ENCODE measurements at regions of chr1 and their contacts with region 1.

Region 1: GRCh38 chr1:206912445-206913095 is 9.2 kb downstream of the FCMR start:
- DNase-seq: peak; percentile 48 to 69
- ATAC-seq: peak; percentile 55 to 56
- H3K4me3 ChIP-seq: no peak overlapping the region
- H3K27ac ChIP-seq: no peak overlapping the region
- H3K4me1 ChIP-seq: peaks cover 19 to 20% of the 10 kb centered on the region in 2 donors
- H3K27me3 ChIP-seq: peaks cover 0 to 4% (median 0%) of the 10 kb centered on the region in 3 donors
- CTCF ChIP-seq: peak; percentile 76 to 88 (median 87)
- POLR2A ChIP-seq: no peak

Region 2: DNA sequence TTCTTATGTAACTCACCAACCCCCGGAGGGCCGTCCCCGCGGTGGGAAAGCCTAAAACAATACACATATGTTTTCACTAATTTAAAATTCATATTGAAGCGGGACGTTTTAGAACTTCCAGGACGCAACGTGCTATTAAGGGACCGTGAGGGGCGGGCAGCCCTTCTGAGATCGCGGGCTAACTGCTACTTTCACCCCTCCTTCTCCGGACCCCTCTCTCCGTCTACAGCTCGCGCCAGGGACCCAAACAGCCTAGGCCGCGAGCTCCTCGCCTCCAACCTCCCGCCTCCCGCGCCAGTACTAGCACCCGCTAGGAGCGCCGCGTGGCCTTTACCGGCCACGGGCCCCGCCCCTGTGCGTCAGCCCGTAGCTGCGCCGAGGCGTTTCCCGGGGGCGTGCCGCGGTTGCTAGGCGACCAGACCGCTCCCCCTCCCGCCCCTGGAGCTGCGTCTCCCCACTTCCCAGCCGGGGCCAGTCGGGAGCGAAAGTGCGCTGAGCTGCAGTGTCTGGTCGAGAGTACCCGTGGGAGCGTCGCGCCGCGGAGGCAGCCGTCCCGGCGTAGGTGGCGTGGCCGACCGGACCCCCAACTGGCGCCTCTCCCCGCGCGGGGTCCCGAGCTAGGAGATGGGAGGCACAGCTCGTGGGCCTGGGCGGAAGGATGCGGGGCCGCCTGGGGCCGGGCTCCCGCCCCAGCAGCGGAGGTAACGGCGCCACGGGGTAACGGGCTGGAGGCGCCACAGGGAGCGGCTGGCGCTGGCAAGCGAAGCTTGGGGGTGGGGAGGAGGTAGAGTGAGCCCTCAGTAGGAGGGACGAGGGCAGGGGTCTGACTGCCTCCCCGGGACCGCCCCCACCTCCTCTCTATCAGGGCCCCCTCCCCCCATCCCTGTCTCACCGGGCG is 277.2 kb before region 1 on chr1 and contains the start of gene DYRK3:
- in situ Hi-C with region 1: loop called in 3 of 4 experiments (anchors 5 to 10 kb)
- intact Hi-C with region 1: loop called (anchors 1 kb)
- DNase-seq: peak; percentile 84 to 88
- ATAC-seq: peak; percentile 81 to 83
- H3K4me3 ChIP-seq: peak within 1 kb of the TSS; percentile 76 to 93 (median 88)
- H3K27ac ChIP-seq: peak within 1 kb of the TSS; percentile 70 to 79 (median 73)
- H3K4me1 ChIP-seq: peaks cover 11 to 16% of the 10 kb centered on the region in 2 donors
- H3K27me3 ChIP-seq: no peaks in the 10 kb centered on the region
- CTCF ChIP-seq: peak in 3 of 5 experiments; percentile 26 to 46 (median 29)
- POLR2A ChIP-seq: peak; percentile 89 to 95
- total RNA-seq, gene DYRK3: 0.85 to 1.8 (median 1.0) TPM

Region 3: GRCh38 chr1:206693029-206693428 is 219.5 kb before region 1 on chr1:
- in situ Hi-C with region 1: no loop called
- intact Hi-C with region 1: loop called (anchors 5 kb)
- DNase-seq: peak; percentile 81 to 93
- ATAC-seq: peak; percentile 60 to 67
- H3K4me3 ChIP-seq: peak overlapping the region; percentile 34 to 55 (median 37)
- H3K27ac ChIP-seq: peak overlapping the region; percentile 93 to 98 (median 96)
- H3K4me1 ChIP-seq: peaks cover 100% of the 10 kb centered on the region in 2 donors
- H3K27me3 ChIP-seq: no peaks in the 10 kb centered on the region
- CTCF ChIP-seq: no peak
- POLR2A ChIP-seq: peak; percentile 57 to 60

Region 4: GRCh38 chr1:206734499-206735142 is 177.9 kb before region 1 on chr1:
- in situ Hi-C with region 1: loop called in 3 of 4 experiments (anchors 5 to 10 kb)
- intact Hi-C with region 1: loop called (anchors 2 kb)
- DNase-seq: no peak
- ATAC-seq: peak; percentile 24 to 30
- H3K4me3 ChIP-seq: no peak overlapping the region
- H3K27ac ChIP-seq: no peak overlapping the region
- H3K4me1 ChIP-seq: peaks cover 16 to 18% of the 10 kb centered on the region in 2 donors
- H3K27me3 ChIP-seq: no peaks in the 10 kb centered on the region
- CTCF ChIP-seq: peak; percentile 39 to 62 (median 54)
- POLR2A ChIP-seq: no peak

Region 5: DNA sequence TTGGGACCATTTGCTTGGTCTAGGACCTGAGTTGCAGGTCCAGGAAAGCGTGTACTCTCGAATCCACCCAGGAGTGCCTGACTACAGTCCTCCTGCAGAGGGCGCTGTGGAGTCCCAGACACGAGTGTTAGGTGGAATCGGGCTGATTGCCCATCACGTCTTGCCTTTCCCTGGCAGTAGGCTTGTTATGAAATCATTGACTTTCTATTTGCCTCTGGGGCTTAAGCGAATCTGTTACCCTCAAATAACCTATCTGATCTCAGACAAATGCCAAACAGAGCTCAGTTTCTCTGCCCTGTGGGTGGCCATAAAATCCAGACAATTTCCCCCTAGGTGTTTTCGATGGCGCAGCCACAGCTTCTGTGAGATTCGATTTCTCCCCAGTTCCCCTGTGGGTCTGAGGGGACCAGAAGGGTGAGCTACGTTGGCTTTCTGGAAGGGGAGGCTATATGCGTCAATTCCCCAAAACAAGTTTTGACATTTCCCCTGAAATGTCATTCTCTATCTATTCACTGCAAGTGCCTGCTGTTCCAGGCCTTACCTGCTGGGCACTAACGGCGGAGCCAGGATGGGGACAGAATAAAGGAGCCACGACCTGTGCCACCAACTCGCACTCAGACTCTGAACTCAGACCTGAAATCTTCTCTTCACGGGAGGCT is 47.4 kb before region 1 on chr1 and contains the start of gene IL20:
- in situ Hi-C with region 1: loop called (anchors 10 kb)
- intact Hi-C with region 1: loop called (anchors 1 kb)
- DNase-seq: peak; percentile 54 to 84
- ATAC-seq: peak; percentile 89 to 96
- H3K4me3 ChIP-seq: no peak within 1 kb of the TSS
- H3K27ac ChIP-seq: peak within 1 kb of the TSS in 1 of 4 donors; percentile 44
- H3K4me1 ChIP-seq: peaks cover 0 to 3% of the 10 kb centered on the region in 2 donors
- H3K27me3 ChIP-seq: no peaks in the 10 kb centered on the region
- CTCF ChIP-seq: peak; percentile 73 to 91 (median 82)
- POLR2A ChIP-seq: no peak
- total RNA-seq, gene IL20: not detected

Region 6: GRCh38 chr1:207052911-207053769 is 140.6 kb after region 1 on chr1 and contains the start of gene PFKFB2:
- in situ Hi-C with region 1: no loop called
- intact Hi-C with region 1: loop called (anchors 5 kb)
- DNase-seq: peak; percentile 97 to 98
- ATAC-seq: peak; percentile 70 to 73
- H3K4me3 ChIP-seq: peak within 1 kb of the TSS; percentile 74 to 82 (median 76)
- H3K27ac ChIP-seq: peak within 1 kb of the TSS; percentile 93 to 95 (median 94)
- H3K4me1 ChIP-seq: peaks cover 29 to 50% of the 10 kb centered on the region in 2 donors
- H3K27me3 ChIP-seq: no peaks in the 10 kb centered on the region
- CTCF ChIP-seq: peak; percentile 42 to 58 (median 52)
- POLR2A ChIP-seq: peak; percentile 98
- total RNA-seq, gene PFKFB2: 35.5 to 40.3 (median 37.6) TPM

Region 7: DNA sequence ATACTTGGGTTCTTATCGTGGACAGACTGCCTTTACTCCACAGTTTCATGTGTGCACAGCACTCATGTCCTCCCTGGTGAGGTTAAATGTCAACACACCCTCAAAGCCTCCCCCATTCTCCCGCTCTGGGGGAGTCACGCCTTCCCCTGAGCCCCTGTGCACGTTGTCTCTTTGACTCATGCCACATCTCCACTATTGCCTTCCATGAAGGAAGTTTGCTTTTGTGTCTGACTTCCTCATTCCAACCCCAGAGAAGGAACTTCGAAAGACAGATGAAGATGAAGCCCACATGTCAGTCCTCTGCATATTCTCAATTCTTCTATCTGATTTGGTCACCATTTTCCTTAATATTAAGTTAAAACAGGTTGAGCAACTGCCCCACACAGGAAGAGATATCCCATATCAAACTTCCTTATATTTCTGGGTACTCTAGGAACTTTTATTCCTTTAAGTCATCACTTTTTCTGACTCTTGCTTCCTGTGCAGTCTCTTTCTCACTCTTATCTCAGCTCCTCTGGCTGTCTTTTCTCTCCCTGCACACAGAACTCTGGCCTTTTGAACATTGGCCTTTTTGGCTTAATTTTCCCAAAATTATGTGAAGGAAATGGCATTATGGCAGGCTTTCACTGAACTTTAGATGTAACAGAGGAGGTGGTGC is 233.0 kb after region 1 on chr1:
- in situ Hi-C with region 1: no loop called
- intact Hi-C with region 1: no loop called
- DNase-seq: no peak
- ATAC-seq: no peak
- H3K4me3 ChIP-seq: no peak overlapping the region
- H3K27ac ChIP-seq: no peak overlapping the region
- H3K4me1 ChIP-seq: no peaks in the 10 kb centered on the region
- H3K27me3 ChIP-seq: no peaks in the 10 kb centered on the region
- CTCF ChIP-seq: no peak
- POLR2A ChIP-seq: no peak

Region 8: GRCh38 chr1:207321079-207321789 is 408.7 kb after region 1 on chr1 and contains the start of gene CD55:
- in situ Hi-C with region 1: no loop called
- intact Hi-C with region 1: no loop called
- DNase-seq: peak; percentile 97 to 98
- ATAC-seq: peak; percentile 89 to 91
- H3K4me3 ChIP-seq: peak within 1 kb of the TSS; percentile 82 to 99 (median 95)
- H3K27ac ChIP-seq: peak within 1 kb of the TSS; percentile 96 to 100 (median 98)
- H3K4me1 ChIP-seq: peaks cover 17 to 22% of the 10 kb centered on the region in 2 donors
- H3K27me3 ChIP-seq: no peaks in the 10 kb centered on the region
- CTCF ChIP-seq: peak in 3 of 5 experiments; percentile 30 to 32 (median 31)
- POLR2A ChIP-seq: peak; percentile 96 to 97
- total RNA-seq, gene CD55: 75.2 to 428 (median 110) TPM

Measured in gastrocnemius medialis (tissue), 4 donors.